BJ (cell line): ENCODE measurements at regions of chr7 and their contacts with region 1.

Region 1: GRCh38 chr7:131574741-131575140 is 18.3 kb upstream of the PODXL start:
- DNase-seq: no peak
- H3K4me3 ChIP-seq: no peak overlapping the region
- H3K27me3 ChIP-seq: peaks cover 4% of the 10 kb centered on the region
- CTCF ChIP-seq: no peak

Region 2: GRCh38 chr7:131587315-131587923 is 12.7 kb after region 1 on chr7:
- CTCF ChIA-PET with region 1: no interaction called
- POLR2A ChIA-PET with region 1: no interaction called
- DNase-seq: no peak
- H3K4me3 ChIP-seq: no peak overlapping the region
- H3K27me3 ChIP-seq: peaks cover 15% of the 10 kb centered on the region
- CTCF ChIP-seq: no peak

Region 3: GRCh38 chr7:131600085-131600881 is 25.5 kb after region 1 on chr7:
- CTCF ChIA-PET with region 1: no interaction called
- POLR2A ChIA-PET with region 1: interaction called, 10 read pairs
- DNase-seq: no peak
- H3K4me3 ChIP-seq: no peak overlapping the region
- H3K27me3 ChIP-seq: peaks cover 16% of the 10 kb centered on the region
- CTCF ChIP-seq: no peak